Heart right ventricle (tissue), 16 donors: ENCODE measurements at regions of chr19 and their contacts with region 1.

Region 1: GRCh38 chr19:57599761-57600383 is at the start of gene ZNF530:
- DNase-seq: peak; percentile 96
- ATAC-seq: peak; percentile 98 to 100 (median 100)
- H3K4me3 ChIP-seq: peak within 1 kb of the TSS; percentile 60 to 97 (median 83)
- H3K27ac ChIP-seq: peak within 1 kb of the TSS in 9 of 10 donors; percentile 41 to 84 (median 67)
- H3K4me1 ChIP-seq: peaks cover 2 to 21% (median 10%) of the 10 kb centered on the region in 9 donors
- H3K27me3 ChIP-seq: no peaks in the 10 kb centered on the region
- CTCF ChIP-seq: peak in 2 of 9 donors; percentile 8 to 22
- total RNA-seq, gene ZNF530: 3.2 to 5.6 (median 4.4) TPM

Region 2: DNA sequence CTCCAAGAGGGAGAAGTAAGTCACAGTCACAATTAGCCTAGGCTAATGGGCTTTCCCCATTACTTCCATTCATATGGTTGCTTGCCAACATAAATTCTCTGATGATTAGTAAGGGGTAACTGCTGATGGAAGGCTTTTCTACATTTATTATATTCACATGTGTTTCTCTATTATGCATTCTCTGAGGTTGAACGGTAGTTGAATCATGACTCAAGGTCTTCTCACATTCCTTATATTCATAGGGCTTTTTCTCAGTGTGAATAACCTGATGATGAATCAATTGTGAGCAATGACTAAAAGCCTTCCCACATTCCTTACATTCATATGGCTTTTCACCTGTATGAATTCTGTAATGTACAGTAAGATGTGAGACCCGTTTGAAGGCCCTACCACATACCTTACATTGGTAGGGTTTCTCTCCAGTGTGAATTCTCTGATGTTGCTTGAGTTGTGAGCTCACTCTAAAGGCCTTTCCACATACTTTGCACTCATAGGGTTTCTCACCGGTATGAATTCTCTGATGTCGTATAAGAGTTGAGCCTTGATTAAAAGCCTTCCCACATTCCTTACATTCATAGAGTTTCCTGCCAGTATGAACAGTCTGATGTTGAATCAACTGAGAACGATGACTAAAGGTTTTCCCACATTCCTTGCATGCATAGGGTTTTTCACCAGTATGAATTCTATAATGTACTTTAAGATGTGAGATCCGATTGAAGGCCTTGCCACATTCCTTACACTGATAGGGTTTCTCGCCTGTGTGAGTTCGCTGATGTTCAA is 1215.9 kb before region 1 on chr19:
- intact Hi-C with region 1: loop called in 1 of 10 experiments (anchors 10 kb)
- DNase-seq: no peak
- ATAC-seq: no peak
- H3K4me3 ChIP-seq: no peak overlapping the region
- H3K27ac ChIP-seq: no peak overlapping the region
- H3K4me1 ChIP-seq: no peaks in the 10 kb centered on the region
- H3K27me3 ChIP-seq: no peaks in the 10 kb centered on the region
- CTCF ChIP-seq: no peak

Region 3: GRCh38 chr19:57578487-57579205 is 21.2 kb before region 1 on chr19 and contains the start of gene ZNF416:
- intact Hi-C with region 1: loop called in 1 of 10 experiments (anchors 2 kb)
- DNase-seq: peak; percentile 95 to 99
- ATAC-seq: peak; percentile 96 to 99 (median 98)
- H3K4me3 ChIP-seq: peak within 1 kb of the TSS; percentile 72 to 98 (median 88)
- H3K27ac ChIP-seq: peak within 1 kb of the TSS in 9 of 10 donors; percentile 61 to 83 (median 75)
- H3K4me1 ChIP-seq: peaks cover 12 to 38% (median 21%) of the 10 kb centered on the region in 9 donors
- H3K27me3 ChIP-seq: no peaks in the 10 kb centered on the region
- CTCF ChIP-seq: peak in 5 of 9 donors; percentile 17 to 56 (median 49)
- total RNA-seq, gene ZNF416: 2.9 to 6.5 (median 4.6) TPM

Region 4: DNA sequence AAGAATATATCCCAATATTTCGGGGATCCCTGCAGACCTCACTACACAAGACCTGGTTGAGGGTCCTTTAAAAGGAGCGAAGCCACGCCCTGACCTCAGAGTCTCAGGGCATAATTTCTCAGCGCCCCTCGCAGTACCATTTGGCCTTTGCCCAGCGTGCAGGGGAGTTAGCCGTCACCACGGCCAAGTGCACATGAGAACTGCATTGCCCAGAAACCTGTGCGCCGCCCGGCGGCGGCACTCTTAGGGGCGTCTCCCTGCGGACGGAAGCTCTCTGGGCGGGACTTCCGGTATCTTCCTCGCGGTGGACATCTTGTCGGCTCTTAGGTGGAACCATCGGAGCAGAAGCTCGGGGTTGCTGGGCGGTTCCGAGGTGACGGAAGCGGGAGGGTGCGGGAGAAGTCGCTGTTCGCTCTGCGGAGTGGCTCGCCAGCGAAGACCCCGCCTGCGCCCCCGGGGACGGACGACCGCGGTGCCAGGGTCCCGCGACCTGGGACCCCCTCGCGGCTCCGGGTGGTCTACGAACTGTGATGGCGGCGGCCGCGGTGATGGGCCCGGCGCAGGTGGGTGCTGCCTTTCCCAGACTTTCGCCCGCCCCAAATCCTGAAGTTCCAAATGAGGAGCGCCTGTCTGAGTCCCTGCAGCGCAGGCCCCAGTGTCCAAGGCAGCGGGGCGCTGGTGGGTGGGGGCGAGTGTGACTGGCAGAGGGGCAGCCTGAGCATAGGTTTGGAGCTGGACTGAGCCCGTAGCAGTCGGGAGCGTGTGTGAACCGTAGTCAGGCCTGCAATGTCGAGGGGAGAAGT is 14.3 kb after region 1 on chr19 and contains the start of gene ZNF134:
- intact Hi-C with region 1: no loop called
- DNase-seq: peak; percentile 93 to 94
- ATAC-seq: peak; percentile 96 to 100 (median 99)
- H3K4me3 ChIP-seq: peak within 1 kb of the TSS; percentile 66 to 100 (median 94)
- H3K27ac ChIP-seq: peak within 1 kb of the TSS in 9 of 10 donors; percentile 54 to 89 (median 85)
- H3K4me1 ChIP-seq: peaks cover 0 to 33% (median 14%) of the 10 kb centered on the region in 9 donors
- H3K27me3 ChIP-seq: no peaks in the 10 kb centered on the region
- CTCF ChIP-seq: peak in 7 of 9 donors; percentile 27 to 64 (median 53)
- total RNA-seq, gene ZNF134: 9.5 to 18.0 (median 12.7) TPM

Region 5: DNA sequence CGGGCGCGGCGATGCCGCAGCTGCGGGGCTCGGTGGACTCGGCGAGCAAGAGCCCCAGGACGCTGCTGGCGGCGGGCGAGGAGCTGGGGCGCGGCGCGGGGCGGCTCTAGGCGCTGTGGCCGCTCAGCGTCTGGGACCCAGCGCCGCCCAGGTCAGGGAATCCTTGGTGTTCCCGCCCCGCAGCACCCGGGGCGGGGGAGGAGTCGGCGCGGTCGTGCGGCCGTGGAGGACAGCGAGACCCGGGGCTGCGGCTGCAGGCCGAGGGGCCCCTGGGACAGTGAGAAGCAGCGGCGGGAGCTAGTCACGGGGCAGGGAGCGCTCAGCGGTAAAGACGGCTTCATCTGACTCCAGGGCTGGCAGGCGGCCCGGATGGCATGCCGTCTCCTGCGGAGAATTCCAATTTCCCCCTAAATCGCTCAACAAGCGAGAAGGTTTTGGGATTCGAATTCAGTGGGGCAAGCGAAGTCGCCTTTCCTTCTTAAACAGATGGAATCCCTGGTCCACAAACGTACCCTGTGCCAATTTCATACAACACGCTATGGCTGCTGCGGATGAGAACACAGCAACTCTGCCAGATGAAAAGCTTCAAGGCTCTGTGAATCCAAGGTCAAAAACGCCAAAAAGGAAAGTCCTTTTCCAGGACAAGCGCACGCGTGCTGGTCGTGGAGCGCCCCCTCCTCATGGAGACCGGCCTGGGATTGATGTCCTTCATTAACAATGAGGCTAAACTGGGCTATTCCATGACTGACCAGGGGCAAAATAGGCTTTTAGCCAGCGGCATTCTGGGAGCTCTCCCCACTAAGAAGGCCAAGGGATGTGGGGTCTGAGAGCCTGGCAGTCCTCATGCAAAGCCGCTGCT is 64.6 kb after region 1 on chr19:
- intact Hi-C with region 1: no loop called
- DNase-seq: peak; percentile 40 to 68
- ATAC-seq: peak; percentile 92 to 98 (median 95)
- H3K4me3 ChIP-seq: peak overlapping the region; percentile 41 to 71 (median 60)
- H3K27ac ChIP-seq: peak overlapping the region in 9 of 10 donors; percentile 56 to 88 (median 75)
- H3K4me1 ChIP-seq: peaks cover 0 to 15% (median 5%) of the 10 kb centered on the region in 9 donors
- H3K27me3 ChIP-seq: peaks cover 0 to 47% (median 0%) of the 10 kb centered on the region in 7 donors
- CTCF ChIP-seq: no peak